Activated CD4-positive, alpha-beta memory T cell treated with anti-CD3 and anti-CD28 coated beads, Interleukin-2, amount 10 ng/mL, durations not matched to agents 7 days and 5 days (primary cell): ENCODE measurements at regions of chr19 and their contacts with region 1.

Region 1: GRCh38 chr19:37313335-37313627 is 57.6 kb upstream of the ZNF527 start:
- DNase-seq: no peak
- H3K4me3 Mint-ChIP-seq: peak overlapping the region; percentile 64
- H3K27ac Mint-ChIP-seq: peak overlapping the region; percentile 34
- H3K4me1 Mint-ChIP-seq: peaks cover 17% of the 10 kb centered on the region
- H3K27me3 Mint-ChIP-seq: no peaks in the 10 kb centered on the region

Region 2: GRCh38 chr19:37334179-37335071 is 21.1 kb after region 1 on chr19:
- CTCF ChIA-PET with region 1: interaction called, 4 read pairs
- POLR2A ChIA-PET with region 1: interaction called, 10 read pairs
- DNase-seq: peak; percentile 90
- H3K4me3 Mint-ChIP-seq: peak overlapping the region; percentile 86
- H3K27ac Mint-ChIP-seq: peak overlapping the region; percentile 78
- H3K4me1 Mint-ChIP-seq: peaks cover 22% of the 10 kb centered on the region
- H3K27me3 Mint-ChIP-seq: no peaks in the 10 kb centered on the region

Region 3: DNA sequence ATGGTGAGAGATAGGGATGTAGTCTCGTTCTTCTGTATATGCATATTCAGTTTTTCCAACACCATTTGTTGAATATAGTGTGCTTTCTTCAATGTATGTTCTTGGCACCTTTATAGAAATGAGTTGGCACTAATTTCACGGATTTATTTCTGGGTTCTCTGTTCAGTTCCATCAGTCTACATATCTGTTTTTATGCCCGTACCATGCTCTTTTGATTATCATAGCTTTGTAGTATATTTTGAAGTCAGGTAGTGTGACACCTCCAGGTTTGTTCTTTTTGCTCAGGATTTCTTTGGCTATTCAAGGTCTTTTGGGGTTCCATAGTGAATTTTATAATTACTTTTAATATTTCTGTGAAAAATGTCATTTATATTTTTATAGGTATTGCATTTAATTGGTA is 178.9 kb after region 1 on chr19:
- CTCF ChIA-PET with region 1: no interaction called
- POLR2A ChIA-PET with region 1: no interaction called
- DNase-seq: no peak
- H3K4me3 Mint-ChIP-seq: no peak overlapping the region
- H3K27ac Mint-ChIP-seq: no peak overlapping the region
- H3K4me1 Mint-ChIP-seq: no peaks in the 10 kb centered on the region
- H3K27me3 Mint-ChIP-seq: no peaks in the 10 kb centered on the region